ENCODE measurements at regions of chr1 and their contacts with region 1.

Region 1: DNA sequence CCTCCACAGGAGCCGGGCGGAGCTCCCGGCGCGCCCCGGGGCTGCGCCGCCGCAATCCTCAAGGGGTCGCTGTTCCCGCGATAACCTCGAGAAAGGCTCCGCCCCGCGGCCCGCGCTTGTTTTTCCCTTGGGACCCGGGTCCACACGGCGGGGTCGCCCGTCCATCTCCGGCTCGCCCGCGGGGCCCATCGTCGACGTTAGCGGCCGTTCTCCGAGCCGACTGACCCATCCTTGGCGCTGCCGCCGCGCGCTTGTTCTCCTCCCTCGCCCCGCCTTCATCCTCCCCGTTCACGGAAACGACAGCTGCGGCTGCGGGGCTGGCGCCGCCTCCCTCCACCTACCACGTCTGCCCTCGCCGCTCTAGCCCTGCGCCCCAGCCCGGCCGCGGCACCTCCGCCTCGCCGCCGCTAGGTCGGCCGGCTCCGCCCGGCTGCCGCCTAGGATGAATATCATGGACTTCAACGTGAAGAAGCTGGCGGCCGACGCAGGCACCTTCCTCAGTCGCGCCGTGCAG is at the start of gene SH3GLB1:
- DNase-seq: peak; percentile 87
- H3K4me3 Mint-ChIP-seq: peak within 1 kb of the TSS; percentile 100
- H3K27ac Mint-ChIP-seq: peak within 1 kb of the TSS; percentile 97
- H3K4me1 Mint-ChIP-seq: peaks cover 47% of the 10 kb centered on the region
- H3K27me3 Mint-ChIP-seq: no peaks in the 10 kb centered on the region
- total RNA-seq, gene SH3GLB1: 63.4 and 66.8 TPM in 2 replicates

Region 2: DNA sequence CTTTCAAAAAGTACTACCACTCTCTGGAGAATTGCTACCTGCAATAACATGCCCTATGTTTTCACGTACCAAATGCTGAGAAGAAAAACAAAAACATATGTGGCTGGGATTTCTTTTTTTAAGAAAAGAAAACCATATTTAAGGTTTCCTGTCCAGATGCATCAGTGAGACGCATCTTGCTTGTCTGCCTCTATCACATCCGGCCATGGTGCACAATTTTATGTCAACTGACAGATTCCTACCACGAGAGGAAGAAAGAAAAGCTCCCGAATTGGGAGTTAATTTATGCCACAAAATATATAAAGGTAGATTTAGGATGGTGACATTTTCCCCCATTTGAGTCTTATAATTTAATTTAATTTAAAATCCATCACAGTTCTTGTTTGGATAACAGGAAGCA is 485.7 kb before region 1 on chr1:
- intact Hi-C with region 1: no loop called
- DNase-seq: no peak
- H3K4me3 Mint-ChIP-seq: no peak overlapping the region
- H3K27ac Mint-ChIP-seq: no peak overlapping the region
- H3K4me1 Mint-ChIP-seq: no peaks in the 10 kb centered on the region
- H3K27me3 Mint-ChIP-seq: no peaks in the 10 kb centered on the region

Region 3: GRCh38 chr1:86380257-86380861 is 324.2 kb before region 1 on chr1:
- intact Hi-C with region 1: loop called (anchors 2 kb)
- DNase-seq: no peak
- H3K4me3 Mint-ChIP-seq: no peak overlapping the region
- H3K27ac Mint-ChIP-seq: no peak overlapping the region
- H3K4me1 Mint-ChIP-seq: peaks cover 22% of the 10 kb centered on the region
- H3K27me3 Mint-ChIP-seq: no peaks in the 10 kb centered on the region

Region 4: GRCh38 chr1:86395771-86396497 is 308.6 kb before region 1 on chr1 and contains the start of gene ODF2L:
- intact Hi-C with region 1: loop called (anchors 1 kb)
- DNase-seq: peak; percentile 90
- H3K4me3 Mint-ChIP-seq: peak within 1 kb of the TSS; percentile 97
- H3K27ac Mint-ChIP-seq: peak within 1 kb of the TSS; percentile 96
- H3K4me1 Mint-ChIP-seq: peaks cover 54% of the 10 kb centered on the region
- H3K27me3 Mint-ChIP-seq: no peaks in the 10 kb centered on the region
- total RNA-seq, gene ODF2L: 21.0 and 22.4 TPM in 2 replicates

Region 5: DNA sequence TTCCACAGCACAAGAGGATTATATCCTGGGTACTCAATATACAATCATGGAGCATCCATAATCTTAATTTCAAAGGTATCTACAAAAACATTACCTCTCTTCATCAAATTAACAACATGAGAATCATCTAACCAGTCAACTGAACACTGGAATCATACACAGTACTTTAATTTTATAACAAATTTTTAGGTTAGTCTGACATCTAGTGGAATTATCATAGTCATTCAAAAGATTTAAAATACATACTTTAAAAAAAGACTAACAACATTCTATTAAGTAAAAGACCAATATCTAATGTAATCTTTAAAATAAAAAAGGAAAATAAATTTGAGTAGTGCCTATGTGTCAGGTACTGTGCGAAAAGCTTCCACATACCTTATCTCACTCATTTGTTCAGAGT is 16.9 kb before region 1 on chr1:
- intact Hi-C with region 1: no loop called
- DNase-seq: no peak
- H3K4me3 Mint-ChIP-seq: no peak overlapping the region
- H3K27ac Mint-ChIP-seq: no peak overlapping the region
- H3K4me1 Mint-ChIP-seq: no peaks in the 10 kb centered on the region
- H3K27me3 Mint-ChIP-seq: peaks cover 6% of the 10 kb centered on the region

Region 6: GRCh38 chr1:86741947-86742572 is 37.5 kb after region 1 on chr1:
- intact Hi-C with region 1: loop called (anchors 1 kb)
- DNase-seq: no peak
- H3K4me3 Mint-ChIP-seq: no peak overlapping the region
- H3K27ac Mint-ChIP-seq: no peak overlapping the region
- H3K4me1 Mint-ChIP-seq: no peaks in the 10 kb centered on the region
- H3K27me3 Mint-ChIP-seq: no peaks in the 10 kb centered on the region

Region 7: DNA sequence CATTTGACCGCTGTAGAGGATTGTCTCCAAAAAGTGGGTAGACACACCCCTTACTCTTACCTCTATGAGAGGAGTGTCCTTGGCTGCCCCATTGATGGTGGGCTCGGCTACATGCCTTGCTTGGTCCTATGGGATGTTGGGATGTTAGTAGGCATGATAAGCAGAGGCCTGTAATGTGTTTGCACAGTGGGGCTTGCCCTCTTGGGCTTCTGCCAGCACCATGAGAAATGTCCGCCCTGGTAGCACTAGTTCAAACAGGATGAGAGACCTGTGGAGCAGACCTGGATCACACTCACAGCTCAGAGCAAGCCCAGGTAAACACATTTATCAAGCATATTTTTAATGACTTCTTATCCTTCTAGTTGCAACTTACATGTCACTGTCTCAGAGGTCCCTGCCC is 54.1 kb after region 1 on chr1:
- intact Hi-C with region 1: no loop called
- DNase-seq: no peak
- H3K4me3 Mint-ChIP-seq: no peak overlapping the region
- H3K27ac Mint-ChIP-seq: no peak overlapping the region
- H3K4me1 Mint-ChIP-seq: no peaks in the 10 kb centered on the region
- H3K27me3 Mint-ChIP-seq: peaks cover 5% of the 10 kb centered on the region

Region 8: GRCh38 chr1:87084244-87084836 is 379.8 kb after region 1 on chr1:
- intact Hi-C with region 1: loop called (anchors 1 kb)
- DNase-seq: no peak
- H3K4me3 Mint-ChIP-seq: no peak overlapping the region
- H3K27ac Mint-ChIP-seq: no peak overlapping the region
- H3K4me1 Mint-ChIP-seq: peaks cover 5% of the 10 kb centered on the region
- H3K27me3 Mint-ChIP-seq: no peaks in the 10 kb centered on the region